Gastrocnemius medialis (tissue), 4 donors: ENCODE measurements at regions of chr7 and their contacts with region 1.

Region 1: DNA sequence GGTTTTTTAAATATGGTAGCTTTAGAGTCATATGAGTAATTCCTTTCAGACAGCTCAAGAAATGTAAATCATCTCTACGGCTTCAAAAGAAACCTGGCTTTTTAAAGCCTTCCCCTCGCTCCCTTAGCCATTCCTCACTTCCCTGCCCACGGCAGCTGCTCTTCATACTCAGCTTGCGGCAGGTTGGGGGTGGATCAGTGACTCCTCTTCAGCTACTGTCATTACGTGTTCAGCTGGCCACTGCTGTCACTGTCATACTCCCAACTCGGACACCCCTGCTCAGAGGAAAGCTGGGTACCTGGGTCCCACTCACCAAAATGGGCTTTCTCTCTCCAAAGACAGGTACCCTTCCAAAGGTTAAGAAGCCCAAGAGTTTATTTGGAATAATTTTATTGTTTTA is 6.6 kb downstream of the YWHAG start:
- DNase-seq: peak; percentile 57 to 79
- ATAC-seq: peak; percentile 87 to 96
- H3K4me3 ChIP-seq: peak overlapping the region in 2 of 4 donors; percentile 10
- H3K27ac ChIP-seq: peak overlapping the region; percentile 79 to 100 (median 97)
- H3K4me1 ChIP-seq: peaks cover 91 to 98% of the 10 kb centered on the region in 2 donors
- H3K27me3 ChIP-seq: no peaks in the 10 kb centered on the region
- CTCF ChIP-seq: no peak
- POLR2A ChIP-seq: no peak

Region 2: DNA sequence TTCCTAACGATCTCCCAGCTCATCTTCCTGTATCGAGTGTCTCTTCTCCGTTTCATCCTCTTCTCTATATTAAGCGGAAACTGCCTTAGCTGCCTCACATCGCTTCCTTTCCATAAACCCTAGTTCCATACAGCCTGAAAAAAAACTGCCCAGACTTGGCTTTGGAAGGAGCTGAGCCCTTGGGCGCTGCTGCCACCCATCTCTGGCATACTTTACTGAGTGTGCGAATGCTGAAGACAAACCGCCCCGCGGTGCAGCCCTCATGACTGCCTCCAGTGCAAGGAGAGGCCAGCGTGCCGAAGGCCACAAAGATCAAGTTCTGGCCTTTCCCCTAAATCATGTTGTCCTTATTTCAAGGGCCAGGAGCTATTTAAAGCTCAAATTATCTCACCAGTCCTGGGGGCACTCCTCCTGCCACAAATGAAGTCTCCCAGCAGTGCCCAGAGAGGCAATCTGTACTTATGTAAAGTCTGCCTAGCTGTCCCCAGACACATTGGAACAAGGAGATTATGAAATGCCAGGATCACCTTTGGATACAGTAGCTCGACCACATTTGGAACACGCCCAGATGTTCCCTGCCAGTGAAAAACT is 18.6 kb before region 1 on chr7:
- in situ Hi-C with region 1: no loop called
- intact Hi-C with region 1: loop called (anchors 1 kb)
- DNase-seq: peak; percentile 78 to 92
- ATAC-seq: peak; percentile 89 to 93
- H3K4me3 ChIP-seq: peak overlapping the region in 3 of 4 donors; percentile 7 to 26 (median 16)
- H3K27ac ChIP-seq: peak overlapping the region; percentile 97 to 100 (median 98)
- H3K4me1 ChIP-seq: peaks cover 85 to 91% of the 10 kb centered on the region in 2 donors
- H3K27me3 ChIP-seq: no peaks in the 10 kb centered on the region
- CTCF ChIP-seq: no peak
- POLR2A ChIP-seq: peak; percentile 8 to 65